Dendritic cell treated with granulocyte-macrophage colony-stimulating factor and Interleukin-4, amounts not matched to agents 40 ng/mL and 50 ng/mL, for 4 days (primary cell): ENCODE measurements at regions of chr4 and their contacts with region 1.

Region 1: GRCh38 chr4:4334798-4335520 is 44.9 kb downstream of the ZBTB49 start:
- H3K4me3 Mint-ChIP-seq: no peak overlapping the region
- H3K27ac Mint-ChIP-seq: no peak overlapping the region
- H3K4me1 Mint-ChIP-seq: no peaks in the 10 kb centered on the region
- H3K27me3 Mint-ChIP-seq: peaks cover 8% of the 10 kb centered on the region

Region 2: GRCh38 chr4:4260253-4260652 is 74.7 kb before region 1 on chr4:
- intact Hi-C with region 1: loop called (anchors 1 kb)
- H3K4me3 Mint-ChIP-seq: no peak overlapping the region
- H3K27ac Mint-ChIP-seq: peak overlapping the region; percentile 67
- H3K4me1 Mint-ChIP-seq: peaks cover 14% of the 10 kb centered on the region
- H3K27me3 Mint-ChIP-seq: peaks cover 10% of the 10 kb centered on the region

Region 3: DNA sequence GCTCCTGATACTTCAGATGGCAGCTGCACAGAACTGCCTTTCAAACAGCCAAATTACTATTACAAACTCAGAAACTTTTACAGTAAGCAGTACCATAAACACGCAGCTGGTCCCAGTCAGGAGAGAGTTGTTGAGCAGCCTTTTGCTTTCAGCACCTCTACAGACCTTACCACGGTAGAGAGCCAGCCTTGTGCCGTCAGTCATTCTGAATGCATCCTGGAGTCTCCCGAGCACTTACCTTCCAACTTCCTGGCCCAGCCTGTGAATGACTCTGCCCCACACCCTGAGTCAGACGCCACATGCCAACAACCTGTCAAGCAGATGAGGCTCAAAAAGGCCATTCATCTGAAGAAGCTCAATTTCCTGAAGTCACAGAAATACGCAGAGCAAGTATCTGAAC is 32.5 kb before region 1 on chr4:
- intact Hi-C with region 1: no loop called
- H3K4me3 Mint-ChIP-seq: no peak overlapping the region
- H3K27ac Mint-ChIP-seq: no peak overlapping the region
- H3K4me1 Mint-ChIP-seq: no peaks in the 10 kb centered on the region
- H3K27me3 Mint-ChIP-seq: no peaks in the 10 kb centered on the region